Activated CD8-positive, alpha-beta T cell treated with anti-CD3 and anti-CD28 coated beads, Interleukin-2, amount 10 ng/mL, durations not matched to agents 7 days and 5 days (primary cell): ENCODE measurements at regions of chr21 and their contacts with region 1.

Region 1: DNA sequence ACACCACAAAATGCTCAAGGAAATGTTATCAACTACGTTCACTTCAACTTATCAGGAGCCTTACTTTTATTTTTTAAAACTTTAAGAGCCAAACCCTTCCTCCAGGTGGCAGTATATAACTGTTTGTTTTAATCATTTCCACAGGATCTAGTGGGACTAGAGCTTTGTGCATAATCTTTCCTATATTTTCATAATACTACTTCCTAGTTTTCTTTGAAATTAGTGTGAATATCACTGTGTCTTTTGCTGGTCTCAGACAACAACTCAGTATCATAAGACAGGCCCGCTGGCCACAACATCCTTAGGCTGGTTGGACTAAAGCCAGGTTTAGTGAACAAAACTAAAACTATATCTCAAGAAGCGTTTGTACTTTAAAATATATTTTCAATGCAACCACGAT is 145.5 kb downstream of the TIAM1 start:
- DNase-seq: no peak
- ATAC-seq: peak; percentile 57
- H3K4me3 Mint-ChIP-seq: no peak overlapping the region
- H3K27ac Mint-ChIP-seq: no peak overlapping the region
- H3K4me1 Mint-ChIP-seq: peaks cover 23% of the 10 kb centered on the region
- H3K27me3 Mint-ChIP-seq: no peaks in the 10 kb centered on the region

Region 2: GRCh38 chr21:31052489-31053142 is 146.0 kb before region 1 on chr21:
- CTCF ChIA-PET with region 1: no interaction called
- POLR2A ChIA-PET with region 1: no interaction called
- DNase-seq: no peak
- ATAC-seq: no peak
- H3K4me3 Mint-ChIP-seq: no peak overlapping the region
- H3K27ac Mint-ChIP-seq: no peak overlapping the region
- H3K4me1 Mint-ChIP-seq: no peaks in the 10 kb centered on the region
- H3K27me3 Mint-ChIP-seq: peaks cover 3% of the 10 kb centered on the region

Region 3: GRCh38 chr21:31107871-31108270 is 90.7 kb before region 1 on chr21:
- CTCF ChIA-PET with region 1: interaction called, 11 read pairs
- POLR2A ChIA-PET with region 1: no interaction called
- DNase-seq: no peak
- ATAC-seq: no peak
- H3K4me3 Mint-ChIP-seq: no peak overlapping the region
- H3K27ac Mint-ChIP-seq: no peak overlapping the region
- H3K4me1 Mint-ChIP-seq: peaks cover 15% of the 10 kb centered on the region
- H3K27me3 Mint-ChIP-seq: peaks cover 7% of the 10 kb centered on the region

Region 4: DNA sequence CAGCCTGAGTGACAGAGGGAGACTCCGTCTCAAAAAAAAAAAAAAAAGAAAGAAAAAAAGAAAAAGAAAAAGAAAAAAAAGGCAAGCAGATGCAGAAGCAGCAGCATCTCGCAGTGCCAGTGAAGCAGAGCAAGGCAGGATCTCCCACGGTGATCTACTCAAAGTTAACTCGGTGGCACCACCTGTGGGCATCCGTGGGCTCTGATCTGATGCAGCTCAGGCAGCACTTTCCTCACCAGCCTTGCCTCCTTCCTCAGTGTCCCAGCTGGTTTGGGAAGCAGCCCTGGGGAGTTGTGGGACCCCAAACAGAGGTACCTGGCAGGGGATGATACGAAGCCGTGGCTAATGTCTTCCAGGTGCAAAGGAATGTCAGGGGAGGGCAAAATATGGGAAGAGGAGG is 56.0 kb before region 1 on chr21:
- CTCF ChIA-PET with region 1: no interaction called
- POLR2A ChIA-PET with region 1: no interaction called
- DNase-seq: peak; percentile 38
- ATAC-seq: peak; percentile 60
- H3K4me3 Mint-ChIP-seq: no peak overlapping the region
- H3K27ac Mint-ChIP-seq: no peak overlapping the region
- H3K4me1 Mint-ChIP-seq: peaks cover 11% of the 10 kb centered on the region
- H3K27me3 Mint-ChIP-seq: no peaks in the 10 kb centered on the region

Region 5: GRCh38 chr21:31604591-31605190 is 406.1 kb after region 1 on chr21:
- CTCF ChIA-PET with region 1: interaction called, 11 read pairs
- POLR2A ChIA-PET with region 1: no interaction called
- DNase-seq: peak; percentile 81
- ATAC-seq: peak; percentile 87
- H3K4me3 Mint-ChIP-seq: no peak overlapping the region
- H3K27ac Mint-ChIP-seq: no peak overlapping the region
- H3K4me1 Mint-ChIP-seq: peaks cover 2% of the 10 kb centered on the region
- H3K27me3 Mint-ChIP-seq: peaks cover 3% of the 10 kb centered on the region